Head of caudate nucleus (tissue), 42 donors: ENCODE measurements at regions of chr3 and their contacts with region 1.

Region 1: DNA sequence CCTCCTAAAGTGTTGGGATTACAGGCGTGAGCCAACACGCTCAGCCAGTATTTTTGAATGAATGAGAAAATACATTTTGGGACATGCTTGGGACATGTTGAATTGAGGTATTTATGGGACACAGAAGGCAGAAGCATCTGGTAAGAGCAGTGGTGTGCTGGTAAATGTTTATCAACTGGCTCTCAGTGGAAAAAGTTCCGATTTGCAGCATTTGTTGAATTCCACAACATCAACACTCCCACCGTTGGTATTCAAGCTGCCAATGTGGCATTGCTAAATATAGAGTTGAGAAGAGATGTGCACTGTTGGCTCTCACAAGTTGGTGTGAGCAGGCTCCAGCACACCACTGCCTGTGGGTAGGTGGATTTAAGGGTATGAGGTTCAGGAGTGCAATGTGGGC is 35.8 kb upstream of the LRRFIP2 start:
- DNase-seq: no peak

Region 2: GRCh38 chr3:36993326-36994283 is 216.6 kb before region 1 on chr3 and contains the start of gene MLH1:
- intact Hi-C with region 1: loop called (anchors 10 kb)
- DNase-seq: peak; percentile 86 to 100 (median 96)

Region 3: GRCh38 chr3:37024092-37024491 is 186.1 kb before region 1 on chr3:
- intact Hi-C with region 1: loop called (anchors 10 kb)
- DNase-seq: no peak